SK-N-SH (cell line): ENCODE measurements at regions of chr15 and their contacts with region 1.

Region 1: DNA sequence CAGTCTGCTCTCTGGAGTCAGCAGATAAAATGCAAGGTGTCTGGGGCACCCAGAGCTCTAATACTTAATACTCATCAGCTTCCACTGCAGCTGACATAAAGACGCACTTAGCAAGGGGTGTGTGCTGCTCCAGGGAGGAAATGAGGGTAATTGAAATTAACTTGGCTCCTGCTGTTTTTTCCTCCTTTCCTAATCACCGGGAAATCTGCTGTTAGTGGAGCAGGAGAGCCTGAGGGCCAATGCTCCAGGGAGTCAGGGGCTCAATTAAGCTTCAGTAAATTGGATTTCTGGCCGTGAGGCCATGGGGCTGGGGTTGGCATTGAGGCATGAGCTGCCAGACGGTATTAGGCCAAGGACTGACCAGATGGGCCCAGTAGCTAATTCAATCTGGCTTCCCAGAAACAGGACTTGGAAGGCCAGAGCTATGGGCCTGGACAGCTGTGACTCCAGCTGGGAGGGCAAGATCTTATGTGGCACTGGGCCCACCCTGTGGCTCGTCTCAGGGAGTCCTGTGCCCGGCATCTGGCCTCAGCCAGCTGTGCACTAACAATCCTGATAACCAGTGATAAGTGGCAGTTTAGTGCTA is 30.7 kb upstream of the CHRNB4 start:
- DNase-seq: peak; percentile 88
- H3K4me3 ChIP-seq: no peak overlapping the region
- H3K27ac ChIP-seq: peak overlapping the region in 1 of 2 experiments; percentile 99; a peak in 2 of 4 replicates
- H3K4me1 ChIP-seq: peaks cover 0 to 65% of the 10 kb centered on the region in 2 experiments; a peak in 2 of 4 replicates
- H3K27me3 ChIP-seq: no peaks in the 10 kb centered on the region
- CTCF ChIP-seq: no peak
- EP300 ChIP-seq: peak; percentile 54 to 100; a peak in 3 of 4 replicates
- RAD21 ChIP-seq: peak; percentile 35

Region 2: DNA sequence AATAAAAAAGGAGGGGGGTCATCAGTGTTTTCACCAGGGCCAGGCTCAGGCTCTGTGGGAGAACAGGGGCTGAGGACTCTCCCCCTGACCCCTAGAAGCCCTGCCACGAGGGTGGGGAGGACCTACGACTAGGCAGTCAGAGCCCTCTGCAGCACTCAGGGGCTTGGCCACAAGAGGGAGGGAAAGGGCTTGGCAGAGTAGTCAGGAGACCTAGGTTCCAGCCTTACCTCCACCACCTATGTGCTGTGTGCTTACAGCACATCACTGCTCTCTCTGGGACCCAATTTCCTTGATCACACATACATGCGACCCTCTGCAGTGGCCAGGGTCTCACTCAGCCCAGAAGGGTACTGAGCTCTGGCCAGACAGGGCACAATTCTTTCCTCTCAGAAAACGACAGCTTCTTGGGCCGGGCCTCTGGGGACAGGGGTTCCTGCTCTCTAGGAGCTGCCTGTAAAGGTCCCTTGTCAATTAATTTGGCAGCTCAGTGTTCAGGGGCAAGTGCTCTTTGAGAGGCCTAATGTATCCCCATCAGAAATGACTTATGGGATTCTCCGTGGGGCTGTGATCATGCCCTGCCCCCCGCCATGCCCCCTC is 355.9 kb before region 1 on chr15:
- CTCF ChIA-PET with region 1: no interaction called
- POLR2A ChIA-PET with region 1: no interaction called
- DNase-seq: peak; percentile 62
- H3K4me3 ChIP-seq: no peak overlapping the region
- H3K27ac ChIP-seq: peak overlapping the region in 1 of 2 experiments; percentile 63; a peak in 2 of 4 replicates
- H3K4me1 ChIP-seq: peaks cover 0 to 16% of the 10 kb centered on the region in 2 experiments; a peak in 1 of 4 replicates
- H3K27me3 ChIP-seq: no peaks in the 10 kb centered on the region
- CTCF ChIP-seq: peak; percentile 38
- EP300 ChIP-seq: no peak
- RAD21 ChIP-seq: peak; percentile 69

Region 3: GRCh38 chr15:78654272-78654671 is 17.4 kb before region 1 on chr15:
- CTCF ChIA-PET with region 1: interaction called, 3 read pairs
- POLR2A ChIA-PET with region 1: interaction called, 12 read pairs
- DNase-seq: no peak
- H3K4me3 ChIP-seq: no peak overlapping the region
- H3K27ac ChIP-seq: no peak overlapping the region
- H3K4me1 ChIP-seq: peaks cover 0 to 6% of the 10 kb centered on the region in 2 experiments; a peak in 1 of 4 replicates
- H3K27me3 ChIP-seq: peaks cover 5% of the 10 kb centered on the region
- CTCF ChIP-seq: no peak
- EP300 ChIP-seq: no peak
- RAD21 ChIP-seq: no peak

Region 4: DNA sequence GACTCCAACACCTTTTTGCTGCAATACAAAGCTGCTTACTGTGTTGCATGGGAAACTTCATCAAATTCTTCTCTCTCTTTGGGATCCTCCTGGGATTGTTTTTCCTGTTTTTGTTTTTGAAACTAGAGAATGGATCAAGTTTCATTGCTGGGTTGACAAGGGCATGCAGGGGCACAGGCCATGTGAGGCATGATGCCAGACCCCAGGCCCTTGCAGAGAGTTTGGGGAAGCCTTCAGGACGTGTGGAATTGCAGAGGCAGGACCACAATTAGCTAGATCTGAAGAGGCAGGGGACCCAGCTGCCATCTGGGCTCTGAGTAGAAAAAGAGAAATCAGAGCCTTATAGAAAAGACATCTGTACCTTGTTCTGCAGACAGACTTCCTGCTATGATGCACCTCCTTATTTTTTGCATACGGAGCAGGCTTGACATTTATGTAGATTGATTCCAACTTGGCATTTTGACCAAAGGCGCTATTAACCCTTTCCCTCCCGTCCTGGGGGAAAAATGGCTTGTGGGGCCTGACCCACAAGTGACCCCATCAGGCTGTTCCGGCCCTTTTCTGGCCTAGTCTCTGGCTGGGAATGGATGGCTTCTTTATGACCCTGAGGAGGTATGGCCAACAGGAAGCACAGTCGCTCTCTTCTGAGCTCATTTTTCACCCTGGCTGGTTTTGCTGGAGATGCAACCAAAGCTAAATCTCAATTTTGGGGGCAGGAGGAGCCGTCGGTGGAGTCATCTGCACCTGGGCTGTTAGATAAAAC is 13.6 kb after region 1 on chr15:
- CTCF ChIA-PET with region 1: interaction called, 21 read pairs
- POLR2A ChIA-PET with region 1: interaction called, 279 read pairs
- DNase-seq: peak; percentile 32
- H3K4me3 ChIP-seq: no peak overlapping the region
- H3K27ac ChIP-seq: peak overlapping the region in 1 of 2 experiments; percentile 93; a peak in 2 of 4 replicates
- H3K4me1 ChIP-seq: peaks cover 0 to 53% of the 10 kb centered on the region in 2 experiments; a peak in 2 of 4 replicates
- H3K27me3 ChIP-seq: peaks cover 6% of the 10 kb centered on the region; the same call in 1 of the 2 replicates
- CTCF ChIP-seq: no peak
- EP300 ChIP-seq: peak in 1 of 2 experiments; percentile 65; a peak in 1 of 4 replicates
- RAD21 ChIP-seq: no peak

Region 5: DNA sequence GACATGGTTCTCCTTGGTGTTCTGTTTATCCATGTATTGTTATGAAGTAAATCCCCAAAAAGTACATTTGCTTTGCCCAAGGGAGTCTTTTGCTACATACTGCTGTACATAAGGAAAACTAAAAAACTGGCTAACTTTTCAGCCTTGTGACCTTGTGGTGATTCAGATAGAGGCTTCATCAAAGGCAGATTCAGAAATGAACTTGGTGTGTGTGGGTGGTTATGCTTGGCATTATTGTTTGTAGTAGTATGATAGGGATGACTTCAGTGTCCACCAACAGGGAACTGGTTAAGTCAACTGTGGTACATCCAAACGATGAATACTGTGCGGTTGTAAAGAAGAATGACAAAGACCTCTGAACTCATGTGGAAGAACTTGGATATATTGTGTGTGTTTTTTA is 44.9 kb after region 1 on chr15:
- CTCF ChIA-PET with region 1: no interaction called
- POLR2A ChIA-PET with region 1: no interaction called
- DNase-seq: no peak
- H3K4me3 ChIP-seq: no peak overlapping the region
- H3K27ac ChIP-seq: no peak overlapping the region
- H3K4me1 ChIP-seq: no peaks in the 10 kb centered on the region
- H3K27me3 ChIP-seq: no peaks in the 10 kb centered on the region; the same call in 1 of the 2 replicates
- CTCF ChIP-seq: no peak
- EP300 ChIP-seq: no peak
- RAD21 ChIP-seq: no peak

Region 6: GRCh38 chr15:78750566-78750965 is 78.8 kb after region 1 on chr15:
- CTCF ChIA-PET with region 1: interaction called, 4 read pairs
- POLR2A ChIA-PET with region 1: interaction called, 21 read pairs
- DNase-seq: no peak
- H3K4me3 ChIP-seq: no peak overlapping the region
- H3K27ac ChIP-seq: peak overlapping the region in 1 of 2 experiments; percentile 45; a peak in 1 of 4 replicates
- H3K4me1 ChIP-seq: peaks cover 0 to 49% of the 10 kb centered on the region in 2 experiments; a peak in 2 of 4 replicates
- H3K27me3 ChIP-seq: no peaks in the 10 kb centered on the region
- CTCF ChIP-seq: no peak
- EP300 ChIP-seq: no peak
- RAD21 ChIP-seq: no peak